ENCODE measurements at regions of chr1 and their contacts with region 1.

Region 1: DNA sequence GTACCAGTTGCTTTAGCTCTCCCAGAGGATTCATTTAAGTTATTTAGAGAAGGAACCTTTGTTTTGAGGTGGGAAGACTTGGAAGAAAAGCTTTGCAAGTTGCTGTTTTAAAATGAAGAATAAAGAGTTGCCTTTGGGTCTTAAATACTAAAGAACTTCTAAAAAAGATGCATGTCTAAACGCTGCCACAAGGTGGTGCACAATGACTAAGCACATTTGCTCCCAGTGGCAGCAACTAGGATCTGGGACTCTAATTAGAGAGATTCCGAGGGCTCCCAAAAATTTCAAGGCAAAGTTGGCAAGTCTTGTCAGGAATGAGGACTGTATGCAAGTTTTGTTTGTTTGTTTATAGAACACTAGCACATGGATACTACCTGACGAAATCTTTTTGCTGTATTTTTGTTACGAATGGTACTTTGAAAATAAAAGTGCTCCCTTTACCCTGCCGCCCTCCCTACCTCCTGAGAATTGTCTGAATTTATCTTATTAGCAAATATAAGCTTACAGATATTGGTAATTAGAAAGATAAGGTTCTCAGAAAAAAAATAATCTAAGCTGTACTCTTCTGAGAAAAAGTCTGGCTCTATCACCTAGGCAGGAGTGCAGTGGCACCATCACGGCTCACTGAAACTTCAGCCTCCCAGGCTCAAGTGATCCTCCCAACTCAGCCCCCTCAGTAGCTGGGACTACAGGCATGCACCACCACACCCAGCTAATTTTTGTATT is 121.8 kb downstream of the HFM1 start:
- DNase-seq: no peak
- ATAC-seq: peak; percentile 75 to 94 (median 84)
- H3K4me3 ChIP-seq: peak overlapping the region; percentile 54
- H3K27ac ChIP-seq: peak overlapping the region; percentile 58
- H3K4me1 ChIP-seq: peaks cover 11% of the 10 kb centered on the region
- H3K27me3 ChIP-seq: no peaks in the 10 kb centered on the region
- CTCF ChIP-seq: peak; percentile 80

Region 2: GRCh38 chr1:91374086-91374485 is 91.2 kb after region 1 on chr1:
- intact Hi-C with region 1: no loop called
- DNase-seq: no peak
- ATAC-seq: no peak
- H3K4me3 ChIP-seq: no peak overlapping the region
- H3K27ac ChIP-seq: no peak overlapping the region
- H3K4me1 ChIP-seq: no peaks in the 10 kb centered on the region
- H3K27me3 ChIP-seq: no peaks in the 10 kb centered on the region
- CTCF ChIP-seq: no peak

Region 3: GRCh38 chr1:91404151-91405012 is 121.5 kb after region 1 on chr1 and contains the start of gene HFM1:
- intact Hi-C with region 1: loop called (anchors 2 kb)
- DNase-seq: peak; percentile 85 to 88
- ATAC-seq: peak; percentile 96 to 98 (median 98)
- H3K4me3 ChIP-seq: peak within 1 kb of the TSS; percentile 85
- H3K27ac ChIP-seq: peak within 1 kb of the TSS; percentile 95
- H3K4me1 ChIP-seq: peaks cover 3% of the 10 kb centered on the region
- H3K27me3 ChIP-seq: peaks cover 0 to 3% (median 0%) of the 10 kb centered on the region in 3 donors
- CTCF ChIP-seq: no peak
- total RNA-seq, gene HFM1: 1.3 to 3.1 (median 1.9) TPM

Region 4: GRCh38 chr1:91500756-91501522 is 218.1 kb after region 1 on chr1 and contains the start of gene CDC7:
- intact Hi-C with region 1: loop called (anchors 5 to 10 kb)
- DNase-seq: peak; percentile 92 to 94
- ATAC-seq: peak; percentile 91 to 98 (median 92)
- H3K4me3 ChIP-seq: peak within 1 kb of the TSS; percentile 73
- H3K27ac ChIP-seq: peak within 1 kb of the TSS; percentile 51
- H3K4me1 ChIP-seq: peaks cover 9% of the 10 kb centered on the region
- H3K27me3 ChIP-seq: no peaks in the 10 kb centered on the region
- CTCF ChIP-seq: peak; percentile 23
- total RNA-seq, gene CDC7: 0.40 to 1.2 (median 0.50) TPM

Region 5: GRCh38 chr1:91924146-91924545 is 641.3 kb after region 1 on chr1:
- intact Hi-C with region 1: loop called (anchors 5 to 10 kb)
- DNase-seq: no peak
- ATAC-seq: no peak
- H3K4me3 ChIP-seq: no peak overlapping the region
- H3K27ac ChIP-seq: no peak overlapping the region
- H3K4me1 ChIP-seq: no peaks in the 10 kb centered on the region
- H3K27me3 ChIP-seq: no peaks in the 10 kb centered on the region
- CTCF ChIP-seq: no peak

Region 6: DNA sequence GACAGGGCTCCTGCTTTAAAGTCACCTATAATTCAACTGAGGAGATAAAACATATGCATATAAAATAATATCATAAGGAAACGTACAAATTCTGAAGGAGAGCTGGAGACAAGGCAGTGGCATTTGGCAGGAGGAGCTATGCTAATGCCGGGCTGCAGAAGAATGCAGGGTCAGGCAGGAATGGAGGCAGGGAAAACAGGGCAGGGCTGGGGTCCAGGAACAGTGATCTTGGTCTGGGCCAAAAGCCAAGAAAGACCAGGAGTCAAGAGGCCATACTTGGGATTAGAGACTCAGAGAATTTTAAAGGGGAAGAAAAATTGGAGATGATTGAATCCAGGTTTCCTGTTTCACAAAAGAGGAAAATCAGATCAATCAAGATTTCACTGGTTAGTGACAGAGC is 646.4 kb after region 1 on chr1:
- intact Hi-C with region 1: loop called (anchors 5 to 10 kb)
- DNase-seq: no peak
- ATAC-seq: no peak
- H3K4me3 ChIP-seq: no peak overlapping the region
- H3K27ac ChIP-seq: no peak overlapping the region
- H3K4me1 ChIP-seq: no peaks in the 10 kb centered on the region
- H3K27me3 ChIP-seq: no peaks in the 10 kb centered on the region
- CTCF ChIP-seq: no peak

Measured in psoas muscle (tissue), 8 donors.